ENCODE measurements at regions of chr1 and their contacts with region 1.

Region 1: GRCh38 chr1:153447498-153448170 is 12.8 kb downstream of the S100A7 start:
- DNase-seq: no peak
- ATAC-seq: no peak
- H3K4me3 Mint-ChIP-seq: no peak overlapping the region
- H3K27ac Mint-ChIP-seq: no peak overlapping the region
- H3K4me1 Mint-ChIP-seq: no peaks in the 10 kb centered on the region
- H3K27me3 Mint-ChIP-seq: peaks cover 29% of the 10 kb centered on the region

Region 2: GRCh38 chr1:153422450-153423068 is 25.1 kb before region 1 on chr1:
- CTCF ChIA-PET with region 1: no interaction called
- POLR2A ChIA-PET with region 1: no interaction called
- intact Hi-C with region 1: loop called in 1 of 2 experiments (anchors 1 kb)
- DNase-seq: peak; percentile 82
- ATAC-seq: no peak
- H3K4me3 Mint-ChIP-seq: no peak overlapping the region
- H3K27ac Mint-ChIP-seq: no peak overlapping the region
- H3K4me1 Mint-ChIP-seq: no peaks in the 10 kb centered on the region
- H3K27me3 Mint-ChIP-seq: peaks cover 41% of the 10 kb centered on the region